ENCODE measurements at regions of chr11 and their contacts with region 1.

Region 1: GRCh38 chr11:71240865-71241691 is 11.3 kb downstream of the SHANK2 start:
- DNase-seq: no peak
- ATAC-seq: no peak
- H3K4me3 Mint-ChIP-seq: no peak overlapping the region
- H3K27ac Mint-ChIP-seq: no peak overlapping the region
- H3K4me1 Mint-ChIP-seq: peaks cover 8% of the 10 kb centered on the region
- H3K27me3 Mint-ChIP-seq: peaks cover 30% of the 10 kb centered on the region
- CTCF ChIP-seq: no peak

Region 2: DNA sequence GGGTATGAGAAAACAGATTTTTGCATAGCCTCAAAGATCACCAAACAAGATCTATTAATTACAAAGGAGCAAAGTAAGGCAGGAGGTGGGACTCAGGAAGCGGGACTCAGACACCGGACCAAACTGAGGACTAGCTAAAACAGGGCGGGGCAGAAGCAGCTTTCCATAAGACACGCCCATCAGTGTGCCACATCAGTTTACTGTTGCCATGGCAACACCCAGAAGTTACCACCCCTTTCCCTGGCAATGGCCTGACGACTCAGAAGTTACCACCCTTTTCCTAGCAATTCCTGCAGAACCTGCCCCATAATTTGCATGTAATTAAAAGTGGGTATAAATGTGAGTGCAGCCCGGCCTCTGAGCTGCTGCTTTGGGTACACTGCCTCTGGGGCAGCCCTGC is 162.6 kb before region 1 on chr11:
- CTCF ChIA-PET with region 1: no interaction called
- POLR2A ChIA-PET with region 1: no interaction called
- intact Hi-C with region 1: no loop called
- DNase-seq: no peak
- ATAC-seq: no peak
- H3K4me3 Mint-ChIP-seq: no peak overlapping the region
- H3K27ac Mint-ChIP-seq: no peak overlapping the region
- H3K4me1 Mint-ChIP-seq: no peaks in the 10 kb centered on the region
- H3K27me3 Mint-ChIP-seq: peaks cover 13% of the 10 kb centered on the region
- CTCF ChIP-seq: no peak

Region 3: GRCh38 chr11:71204294-71204693 is 36.8 kb before region 1 on chr11:
- CTCF ChIA-PET with region 1: no interaction called
- POLR2A ChIA-PET with region 1: no interaction called
- intact Hi-C with region 1: loop called (anchors 5 kb)
- DNase-seq: no peak
- ATAC-seq: peak; percentile 40
- H3K4me3 Mint-ChIP-seq: no peak overlapping the region
- H3K27ac Mint-ChIP-seq: no peak overlapping the region
- H3K4me1 Mint-ChIP-seq: peaks cover 25% of the 10 kb centered on the region
- H3K27me3 Mint-ChIP-seq: peaks cover 5% of the 10 kb centered on the region
- CTCF ChIP-seq: no peak

Region 4: GRCh38 chr11:71453037-71453898 is 212.2 kb after region 1 on chr11 and contains the start of gene NADSYN1:
- CTCF ChIA-PET with region 1: no interaction called
- POLR2A ChIA-PET with region 1: no interaction called
- intact Hi-C with region 1: no loop called
- DNase-seq: peak; percentile 90
- ATAC-seq: peak; percentile 73
- H3K4me3 Mint-ChIP-seq: peak within 1 kb of the TSS; percentile 89
- H3K27ac Mint-ChIP-seq: peak within 1 kb of the TSS; percentile 89
- H3K4me1 Mint-ChIP-seq: peaks cover 51% of the 10 kb centered on the region
- H3K27me3 Mint-ChIP-seq: no peaks in the 10 kb centered on the region
- CTCF ChIP-seq: no peak
- total RNA-seq, gene NADSYN1: 127 and 146 TPM in 2 replicates

Measured in activated B cell treated with CpG ODN at 0.5 μM for 24 hours (primary cell).